Left ventricle myocardium inferior (tissue), 1 donor: ENCODE measurements at regions of chr1 and their contacts with region 1.

Region 1: GRCh38 chr1:237258871-237259270 is 216.9 kb downstream of the RYR2 start:
- DNase-seq: peak; percentile 37
- H3K4me3 ChIP-seq: no peak overlapping the region
- H3K27ac ChIP-seq: peak overlapping the region; percentile 81
- H3K4me1 ChIP-seq: peaks cover 98% of the 10 kb centered on the region
- H3K27me3 ChIP-seq: no peaks in the 10 kb centered on the region
- CTCF ChIP-seq: no peak

Region 2: GRCh38 chr1:237197470-237198425 is 61.1 kb before region 1 on chr1:
- intact Hi-C with region 1: loop called (anchors 10 kb)
- DNase-seq: no peak
- H3K4me3 ChIP-seq: peak overlapping the region; percentile 4
- H3K27ac ChIP-seq: peak overlapping the region; percentile 38
- H3K4me1 ChIP-seq: peaks cover 89% of the 10 kb centered on the region
- H3K27me3 ChIP-seq: no peaks in the 10 kb centered on the region
- CTCF ChIP-seq: peak; percentile 12

Region 3: DNA sequence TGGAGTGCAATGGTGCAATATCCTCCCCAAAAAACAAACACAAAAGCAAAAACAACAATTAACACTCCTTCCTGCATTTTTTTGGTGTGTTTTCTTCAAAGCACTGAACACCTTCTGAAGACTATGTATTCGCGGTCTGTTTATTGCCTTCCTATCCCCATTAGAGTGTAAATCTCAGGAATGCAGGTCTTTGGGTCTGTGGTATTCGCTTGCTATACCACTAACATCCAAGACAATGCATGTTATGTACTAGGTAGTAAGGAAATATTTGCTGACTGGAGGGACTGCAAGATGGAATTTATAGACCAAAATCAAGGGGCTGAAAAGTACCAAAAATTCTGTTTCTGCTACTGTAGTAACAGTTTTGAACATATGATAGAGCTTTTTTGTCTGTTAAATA is 82.5 kb after region 1 on chr1:
- intact Hi-C with region 1: no loop called
- DNase-seq: no peak
- H3K4me3 ChIP-seq: no peak overlapping the region
- H3K27ac ChIP-seq: no peak overlapping the region
- H3K4me1 ChIP-seq: peaks cover 86% of the 10 kb centered on the region
- H3K27me3 ChIP-seq: no peaks in the 10 kb centered on the region
- CTCF ChIP-seq: no peak

Region 4: DNA sequence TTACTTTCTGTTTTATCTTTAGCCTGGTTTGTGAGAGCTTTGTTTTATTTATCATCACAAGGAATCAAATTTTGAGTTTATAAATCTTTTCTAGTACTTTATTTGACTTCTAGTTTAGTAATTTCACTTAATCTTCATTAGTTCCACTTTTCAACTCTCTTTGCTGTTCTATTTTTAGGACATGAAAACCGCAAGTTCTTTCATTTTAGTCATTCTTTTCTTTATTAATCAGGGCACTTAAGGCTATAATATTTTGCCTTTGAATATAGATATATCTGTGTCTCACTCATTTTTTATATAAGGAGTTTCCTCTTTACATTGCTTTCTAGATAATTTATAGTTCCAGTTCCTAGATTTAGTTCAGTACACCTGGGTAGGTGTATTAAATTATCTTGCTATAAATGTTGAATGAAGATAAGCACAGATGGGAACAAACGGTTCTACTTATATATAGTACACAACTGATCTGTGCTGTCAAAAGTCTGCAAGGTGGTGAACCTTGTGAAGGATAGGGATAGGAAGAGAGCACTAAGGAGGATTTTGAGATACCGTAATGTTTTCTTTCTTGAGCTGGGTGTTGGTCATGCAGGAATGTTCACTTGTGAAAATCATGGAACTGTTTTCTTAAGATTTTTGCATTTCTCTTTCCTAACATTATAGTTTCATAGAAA is 185.4 kb after region 1 on chr1:
- intact Hi-C with region 1: no loop called
- DNase-seq: no peak
- H3K4me3 ChIP-seq: no peak overlapping the region
- H3K27ac ChIP-seq: peak overlapping the region; percentile 34
- H3K4me1 ChIP-seq: peaks cover 41% of the 10 kb centered on the region
- H3K27me3 ChIP-seq: no peaks in the 10 kb centered on the region
- CTCF ChIP-seq: no peak

Region 5: GRCh38 chr1:237457573-237457972 is 198.7 kb after region 1 on chr1:
- intact Hi-C with region 1: no loop called
- DNase-seq: no peak
- H3K4me3 ChIP-seq: no peak overlapping the region
- H3K27ac ChIP-seq: peak overlapping the region; percentile 20
- H3K4me1 ChIP-seq: no peaks in the 10 kb centered on the region
- H3K27me3 ChIP-seq: no peaks in the 10 kb centered on the region
- CTCF ChIP-seq: no peak